A673 (cell line): ENCODE measurements at regions of chr2 and their contacts with region 1.

Region 1: GRCh38 chr2:219509780-219510511 is 4.3 kb upstream of the ASIC4 start:
- DNase-seq: peak; percentile 72
- H3K4me3 ChIP-seq: peak overlapping the region; percentile 24
- H3K27ac ChIP-seq: peak overlapping the region; percentile 73
- H3K4me1 ChIP-seq: peaks cover 80% of the 10 kb centered on the region
- H3K27me3 ChIP-seq: no peaks in the 10 kb centered on the region
- CTCF ChIP-seq: peak; percentile 84

Region 2: DNA sequence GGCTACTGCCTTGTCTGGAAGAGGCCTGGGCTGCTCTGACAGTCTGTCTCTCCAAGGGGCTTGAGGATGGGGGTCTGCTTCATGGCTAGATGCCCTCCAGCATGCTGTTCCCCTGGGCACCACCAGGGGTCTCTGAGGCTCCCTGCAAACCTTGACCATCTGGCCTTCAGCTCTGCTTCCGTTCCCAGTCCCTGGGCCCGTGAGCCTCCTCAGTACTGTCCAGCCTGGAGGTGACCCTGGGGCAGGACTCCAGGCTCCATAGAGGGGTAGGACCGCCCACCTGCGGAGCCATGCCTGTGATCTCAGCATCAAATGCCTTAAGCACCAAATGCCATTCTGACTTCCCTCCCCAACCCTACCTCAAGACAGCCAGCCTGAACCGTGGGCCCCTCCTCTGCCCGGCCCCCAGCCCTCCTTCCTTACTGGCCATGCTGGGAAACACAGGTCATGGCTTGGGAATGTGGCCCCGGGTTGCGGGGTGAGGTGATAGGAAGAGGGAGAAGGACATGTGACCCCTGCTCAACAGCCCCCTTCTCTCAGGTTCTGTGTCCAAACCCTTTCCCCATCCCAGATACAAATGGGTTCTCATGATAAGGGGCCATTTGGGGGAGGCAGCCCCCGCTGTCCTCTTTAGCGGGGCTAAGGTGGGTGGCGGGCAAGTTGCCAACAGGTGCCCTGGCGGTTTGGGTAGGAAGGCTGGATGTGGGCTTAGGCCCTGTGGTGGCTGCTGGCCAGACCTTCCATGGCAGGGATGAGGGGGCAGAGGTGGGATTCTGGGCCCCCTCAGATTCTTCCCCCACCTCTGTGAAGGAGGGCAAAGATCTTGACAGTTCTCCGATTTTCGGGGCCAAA is 50.3 kb before region 1 on chr2:
- CTCF ChIA-PET with region 1: interaction called, 11 read pairs
- POLR2A ChIA-PET with region 1: no interaction called
- intact Hi-C with region 1: no loop called
- DNase-seq: peak; percentile 38
- H3K4me3 ChIP-seq: no peak overlapping the region
- H3K27ac ChIP-seq: no peak overlapping the region
- H3K4me1 ChIP-seq: peaks cover 6% of the 10 kb centered on the region
- H3K27me3 ChIP-seq: no peaks in the 10 kb centered on the region
- CTCF ChIP-seq: peak; percentile 90

Region 3: DNA sequence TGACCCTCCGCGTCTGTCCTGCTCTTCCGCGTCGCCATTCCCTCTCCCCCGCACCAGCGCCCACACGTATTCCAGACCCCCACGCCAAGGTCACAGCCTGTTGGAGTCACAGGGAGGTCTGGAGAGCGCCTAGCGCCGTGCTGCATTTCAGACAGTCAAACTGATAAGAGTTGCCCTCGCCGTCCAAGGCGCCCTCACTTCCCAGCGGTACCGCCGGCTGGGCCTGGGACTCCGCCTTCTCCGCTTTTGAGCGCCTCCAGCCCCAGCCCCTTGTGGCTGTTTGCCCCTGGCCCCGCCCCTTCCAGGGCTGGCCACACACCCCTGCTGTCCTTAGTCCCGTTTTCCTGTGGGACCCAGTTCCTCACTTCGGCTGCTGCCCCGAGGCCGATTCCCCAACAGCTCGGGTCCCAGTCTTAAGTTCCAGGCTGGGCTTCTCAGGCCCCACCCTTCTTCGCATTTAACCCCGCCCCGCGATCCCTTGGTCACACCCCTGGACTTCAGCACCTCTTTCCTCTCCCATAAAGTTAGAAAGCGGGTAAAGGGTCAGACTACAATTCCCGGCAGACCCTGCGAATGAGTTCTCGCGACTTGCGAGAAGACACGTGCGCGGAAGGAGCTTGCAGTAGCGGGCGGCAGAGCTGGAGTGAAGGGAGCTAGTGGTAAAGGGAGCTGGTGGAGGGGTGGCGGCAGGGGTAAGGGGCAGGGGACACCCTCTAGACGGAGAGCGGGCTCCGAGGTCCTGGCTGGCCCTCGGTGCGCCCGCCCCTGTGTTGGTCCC is 11.5 kb before region 1 on chr2 and contains the start of gene GMPPA:
- CTCF ChIA-PET with region 1: interaction called, 31 read pairs
- POLR2A ChIA-PET with region 1: interaction called, 9 read pairs
- intact Hi-C with region 1: no loop called
- DNase-seq: peak; percentile 99
- H3K4me3 ChIP-seq: peak within 1 kb of the TSS; percentile 57
- H3K27ac ChIP-seq: peak within 1 kb of the TSS; percentile 79
- H3K4me1 ChIP-seq: peaks cover 26% of the 10 kb centered on the region
- H3K27me3 ChIP-seq: no peaks in the 10 kb centered on the region
- CTCF ChIP-seq: no peak
- total RNA-seq, gene GMPPA: 32.1 and 45.8 TPM in 2 replicates

Region 4: GRCh38 chr2:219521066-219521880 is 11.3 kb after region 1 on chr2:
- CTCF ChIA-PET with region 1: interaction called, 19 read pairs
- POLR2A ChIA-PET with region 1: no interaction called
- intact Hi-C with region 1: no loop called
- DNase-seq: peak; percentile 73
- H3K4me3 ChIP-seq: no peak overlapping the region
- H3K27ac ChIP-seq: peak overlapping the region; percentile 38
- H3K4me1 ChIP-seq: peaks cover 29% of the 10 kb centered on the region
- H3K27me3 ChIP-seq: no peaks in the 10 kb centered on the region
- CTCF ChIP-seq: peak; percentile 77

Region 5: GRCh38 chr2:219530048-219530963 is 20.4 kb after region 1 on chr2:
- CTCF ChIA-PET with region 1: interaction called, 11 read pairs
- POLR2A ChIA-PET with region 1: no interaction called
- intact Hi-C with region 1: no loop called
- DNase-seq: peak; percentile 91
- H3K4me3 ChIP-seq: peak overlapping the region; percentile 20
- H3K27ac ChIP-seq: no peak overlapping the region
- H3K4me1 ChIP-seq: peaks cover 3% of the 10 kb centered on the region
- H3K27me3 ChIP-seq: no peaks in the 10 kb centered on the region
- CTCF ChIP-seq: peak; percentile 95

Region 6: DNA sequence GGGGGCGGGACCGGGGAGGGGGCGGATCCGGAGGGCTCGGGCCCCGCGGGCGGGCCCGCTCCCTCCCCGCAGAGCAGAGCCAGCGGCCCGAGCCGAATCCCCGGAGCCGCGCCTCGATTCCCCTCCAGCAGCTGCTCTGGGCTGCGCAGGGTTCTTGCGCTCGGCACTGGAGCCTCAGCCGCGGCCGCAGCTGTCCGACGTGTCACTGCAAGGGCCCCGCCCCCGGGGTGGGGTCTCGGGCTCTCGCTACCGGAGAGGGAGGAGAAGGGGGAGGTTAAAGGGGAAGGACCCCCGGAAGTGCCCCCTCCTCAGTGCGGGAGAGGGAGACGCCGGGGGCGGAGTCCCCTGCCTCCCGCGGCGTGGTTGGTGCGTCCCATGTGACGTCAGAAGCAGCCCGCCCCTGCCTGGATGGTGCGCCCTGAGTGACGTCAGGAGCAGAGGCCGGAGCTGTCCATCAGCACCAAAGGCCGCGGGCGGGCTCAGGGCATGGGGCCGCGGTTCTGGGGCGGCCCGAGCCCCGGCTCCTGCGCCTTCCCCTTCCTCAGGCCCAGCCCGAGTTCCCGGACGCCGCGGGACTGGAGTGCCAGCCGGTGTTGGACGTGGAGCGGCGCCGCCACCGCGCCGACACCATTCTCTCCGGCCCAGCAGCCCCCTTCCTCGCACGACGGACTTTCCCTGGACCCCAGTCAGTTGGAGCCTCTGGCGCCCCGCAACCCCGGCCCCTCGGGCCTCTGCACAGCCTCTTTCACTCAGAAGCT is 33.8 kb after region 1 on chr2 and contains the starts of genes CHPF and TMEM198:
- CTCF ChIA-PET with region 1: interaction called, 11 read pairs
- POLR2A ChIA-PET with region 1: no interaction called
- intact Hi-C with region 1: no loop called
- DNase-seq: peak; percentile 97
- H3K4me3 ChIP-seq: peak within 1 kb of the TSS; percentile 64
- H3K27ac ChIP-seq: peak within 1 kb of the TSS; percentile 73
- H3K4me1 ChIP-seq: peaks cover 11% of the 10 kb centered on the region
- H3K27me3 ChIP-seq: no peaks in the 10 kb centered on the region
- CTCF ChIP-seq: no peak
- total RNA-seq, gene CHPF: 13.8 and 15.8 TPM in 2 replicates
- total RNA-seq, gene TMEM198: 4.6 and 7.6 TPM in 2 replicates

Region 7: GRCh38 chr2:219603771-219604170 is 93.8 kb after region 1 on chr2:
- CTCF ChIA-PET with region 1: no interaction called
- POLR2A ChIA-PET with region 1: no interaction called
- intact Hi-C with region 1: no loop called
- DNase-seq: no peak
- H3K4me3 ChIP-seq: no peak overlapping the region
- H3K27ac ChIP-seq: no peak overlapping the region
- H3K4me1 ChIP-seq: no peaks in the 10 kb centered on the region
- H3K27me3 ChIP-seq: no peaks in the 10 kb centered on the region
- CTCF ChIP-seq: no peak